ENCODE measurements at regions of chr15 and their contacts with region 1.

Region 1: GRCh38 chr15:72722071-72722696 is 36.2 kb downstream of the BBS4 start:
- DNase-seq: peak; percentile 47 to 85
- H3K4me3 ChIP-seq: no peak overlapping the region
- H3K27ac ChIP-seq: no peak overlapping the region
- H3K4me1 ChIP-seq: peaks cover 0 to 3% (median 1%) of the 10 kb centered on the region in 4 experiments; a peak in 2 of 7 replicates
- H3K27me3 ChIP-seq: no peaks in the 10 kb centered on the region
- CTCF ChIP-seq: peak; percentile 29 to 90 (median 77)
- EP300 ChIP-seq: no peak
- POLR2A ChIP-seq: no peak
- RAD21 ChIP-seq: peak; percentile 75 to 82

Region 2: DNA sequence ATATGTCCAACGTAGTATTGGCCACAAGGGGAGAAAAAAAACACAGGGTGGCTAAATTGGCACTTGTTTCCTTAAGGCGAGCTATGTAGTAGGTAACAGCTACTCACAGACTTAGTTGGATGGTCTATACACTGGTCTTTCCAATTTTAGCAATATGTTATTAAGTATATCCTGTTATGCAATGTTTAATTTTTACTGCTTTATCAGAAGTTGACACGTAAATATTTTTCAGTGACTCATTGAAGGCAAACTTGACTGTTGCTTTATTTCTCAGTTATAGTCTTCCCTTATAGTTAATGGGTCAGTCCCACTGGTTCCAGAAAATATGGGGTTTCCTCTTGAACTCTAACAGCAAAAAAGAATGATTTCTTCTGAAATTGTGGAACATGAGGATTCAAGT is 14.9 kb after region 1 on chr15:
- CTCF ChIA-PET with region 1: interaction called, 19 read pairs
- POLR2A ChIA-PET with region 1: interaction called, 7 read pairs
- DNase-seq: no peak
- H3K4me3 ChIP-seq: no peak overlapping the region
- H3K27ac ChIP-seq: no peak overlapping the region
- H3K4me1 ChIP-seq: no peaks in the 10 kb centered on the region
- H3K27me3 ChIP-seq: no peaks in the 10 kb centered on the region
- CTCF ChIP-seq: no peak
- EP300 ChIP-seq: no peak
- POLR2A ChIP-seq: no peak
- RAD21 ChIP-seq: no peak

Region 3: DNA sequence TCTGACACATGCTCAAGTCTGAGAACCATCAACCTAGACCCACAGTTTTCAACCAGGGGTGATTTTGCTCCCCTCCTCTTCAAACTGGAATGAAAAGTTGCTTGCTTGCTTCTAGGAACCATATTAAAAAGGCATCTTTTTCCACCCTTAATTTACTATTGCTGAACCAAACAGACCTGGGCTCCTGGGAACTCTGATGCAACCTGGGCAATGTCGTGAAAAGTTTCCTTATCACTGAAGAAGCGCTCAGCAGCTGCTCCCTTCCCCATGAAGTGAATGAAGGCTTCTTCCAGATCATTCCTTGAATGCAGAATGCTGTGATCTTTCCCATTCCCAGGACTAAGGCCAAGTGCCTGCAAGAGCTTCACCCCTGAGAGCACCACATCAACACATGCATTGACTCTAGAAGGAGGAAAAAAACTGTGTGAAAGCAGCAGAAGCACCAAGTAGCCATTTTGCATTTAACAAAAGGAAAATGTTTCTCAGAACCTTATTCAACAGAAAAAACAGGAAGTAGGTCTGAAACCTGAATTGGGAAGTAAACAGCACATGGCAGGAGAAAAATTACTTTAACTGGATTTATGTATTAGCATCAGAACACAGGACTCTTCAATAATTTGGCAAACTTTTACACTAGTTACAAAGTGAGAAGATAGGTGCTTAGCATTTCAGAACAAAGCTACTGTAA is 52.7 kb after region 1 on chr15:
- CTCF ChIA-PET with region 1: interaction called, 11 read pairs
- POLR2A ChIA-PET with region 1: no interaction called
- DNase-seq: no peak
- H3K4me3 ChIP-seq: no peak overlapping the region
- H3K27ac ChIP-seq: no peak overlapping the region
- H3K4me1 ChIP-seq: no peaks in the 10 kb centered on the region
- H3K27me3 ChIP-seq: no peaks in the 10 kb centered on the region
- CTCF ChIP-seq: no peak
- EP300 ChIP-seq: no peak
- POLR2A ChIP-seq: no peak
- RAD21 ChIP-seq: no peak

Region 4: DNA sequence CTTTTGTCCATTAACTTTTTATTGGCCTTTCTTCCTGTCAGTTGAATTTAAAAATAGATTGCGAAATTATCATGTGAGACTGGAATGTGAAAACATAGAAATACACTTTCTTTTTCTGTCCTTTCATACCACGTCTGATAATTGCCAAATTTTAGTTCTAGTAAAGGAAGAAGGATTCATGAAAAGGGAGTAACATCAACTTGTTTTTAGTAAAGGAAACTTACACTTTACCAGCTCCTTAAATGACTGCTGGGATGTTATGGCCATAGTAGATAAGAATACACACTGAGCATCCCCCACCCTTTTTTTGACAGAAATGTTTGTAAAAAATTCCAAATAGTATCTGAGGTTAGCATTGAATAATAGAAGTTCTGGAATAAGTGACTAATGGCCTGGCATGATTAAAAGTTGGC is 468.0 kb after region 1 on chr15:
- CTCF ChIA-PET with region 1: no interaction called
- POLR2A ChIA-PET with region 1: no interaction called
- DNase-seq: no peak
- H3K4me3 ChIP-seq: no peak overlapping the region
- H3K27ac ChIP-seq: no peak overlapping the region
- H3K4me1 ChIP-seq: no peaks in the 10 kb centered on the region
- H3K27me3 ChIP-seq: no peaks in the 10 kb centered on the region
- CTCF ChIP-seq: no peak
- EP300 ChIP-seq: no peak
- POLR2A ChIP-seq: no peak
- RAD21 ChIP-seq: no peak

Measured in H1 (cell line).